Endothelial cell of umbilical vein (primary cell): ENCODE measurements at regions of chr5 and their contacts with region 1.

Region 1: DNA sequence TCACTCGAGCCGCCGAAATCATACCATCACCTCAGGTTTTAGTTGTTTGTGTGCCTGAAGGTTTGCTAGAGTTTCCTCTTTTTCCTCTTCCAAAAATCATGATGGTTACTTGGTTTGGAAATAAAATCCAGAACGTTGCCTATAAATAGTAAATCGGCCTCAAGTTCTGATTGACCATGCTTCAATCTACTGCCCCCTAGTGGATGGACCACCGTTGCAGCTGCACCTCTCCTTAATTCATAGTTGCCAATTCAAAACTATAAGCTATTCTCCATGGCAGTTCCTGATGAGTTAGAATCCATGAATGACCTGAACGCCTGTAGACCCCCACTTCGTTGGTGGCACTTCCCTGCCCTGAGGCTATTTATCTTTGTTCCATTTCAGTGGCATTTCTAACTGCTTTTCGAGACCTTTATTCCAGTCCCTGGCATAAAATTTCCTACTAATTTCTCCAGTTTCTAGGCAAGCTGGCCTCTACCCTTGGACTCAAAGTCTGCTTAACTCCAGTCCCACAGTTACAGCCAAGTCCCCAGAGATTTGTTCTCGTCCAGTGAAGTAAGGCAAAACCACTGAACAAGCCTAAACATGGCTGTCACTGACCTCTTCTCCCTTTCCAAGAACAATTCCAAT is 422.6 kb downstream of the EFNA5 start:
- DNase-seq: peak; percentile 69
- H3K4me3 ChIP-seq: no peak overlapping the region
- H3K27ac ChIP-seq: no peak overlapping the region
- H3K4me1 ChIP-seq: no peaks in the 10 kb centered on the region
- H3K27me3 ChIP-seq: no peaks in the 10 kb centered on the region
- CTCF ChIP-seq: peak; percentile 77 to 79
- POLR2A ChIP-seq: no peak

Region 2: GRCh38 chr5:106121972-106122605 is 1126.1 kb before region 1 on chr5:
- CTCF ChIA-PET with region 1: interaction called, 13 read pairs
- POLR2A ChIA-PET with region 1: no interaction called
- dilution Hi-C with region 1: no loop called
- intact Hi-C with region 1: loop called (anchors 2 kb)
- DNase-seq: no peak
- H3K4me3 ChIP-seq: no peak overlapping the region
- H3K27ac ChIP-seq: no peak overlapping the region
- H3K4me1 ChIP-seq: no peaks in the 10 kb centered on the region
- H3K27me3 ChIP-seq: no peaks in the 10 kb centered on the region
- CTCF ChIP-seq: peak; percentile 60 to 70
- POLR2A ChIP-seq: no peak

Region 3: GRCh38 chr5:106454651-106455415 is 793.3 kb before region 1 on chr5:
- CTCF ChIA-PET with region 1: interaction called, 25 read pairs
- POLR2A ChIA-PET with region 1: no interaction called
- dilution Hi-C with region 1: no loop called
- intact Hi-C with region 1: loop called (anchors 1 kb)
- DNase-seq: peak; percentile 72
- H3K4me3 ChIP-seq: no peak overlapping the region
- H3K27ac ChIP-seq: no peak overlapping the region
- H3K4me1 ChIP-seq: no peaks in the 10 kb centered on the region
- H3K27me3 ChIP-seq: no peaks in the 10 kb centered on the region
- CTCF ChIP-seq: peak; percentile 46 to 62
- POLR2A ChIP-seq: no peak

Region 4: DNA sequence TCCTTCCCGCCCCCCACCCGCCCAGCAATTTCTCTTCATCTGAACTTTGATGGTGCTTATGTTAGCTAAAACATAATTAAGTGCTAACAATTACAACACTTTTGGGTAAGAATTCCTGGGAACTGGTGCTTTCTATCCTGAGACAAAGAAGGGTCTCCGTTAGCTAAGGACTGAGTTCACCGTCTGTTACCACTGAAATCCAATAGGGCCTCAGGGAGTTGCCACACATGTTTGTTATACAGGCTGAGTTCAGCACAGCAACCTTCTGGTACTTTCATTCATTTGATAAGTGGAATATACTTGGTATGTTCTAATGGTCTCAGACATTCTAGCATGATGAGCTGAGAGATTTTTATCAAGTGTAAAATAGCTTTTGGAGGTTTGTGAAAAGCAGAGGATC is 15.4 kb before region 1 on chr5:
- CTCF ChIA-PET with region 1: interaction called, 22 read pairs
- POLR2A ChIA-PET with region 1: no interaction called
- dilution Hi-C with region 1: no loop called
- intact Hi-C with region 1: no loop called
- DNase-seq: no peak
- H3K4me3 ChIP-seq: no peak overlapping the region
- H3K27ac ChIP-seq: no peak overlapping the region
- H3K4me1 ChIP-seq: no peaks in the 10 kb centered on the region
- H3K27me3 ChIP-seq: no peaks in the 10 kb centered on the region
- CTCF ChIP-seq: no peak
- POLR2A ChIP-seq: no peak

Region 5: DNA sequence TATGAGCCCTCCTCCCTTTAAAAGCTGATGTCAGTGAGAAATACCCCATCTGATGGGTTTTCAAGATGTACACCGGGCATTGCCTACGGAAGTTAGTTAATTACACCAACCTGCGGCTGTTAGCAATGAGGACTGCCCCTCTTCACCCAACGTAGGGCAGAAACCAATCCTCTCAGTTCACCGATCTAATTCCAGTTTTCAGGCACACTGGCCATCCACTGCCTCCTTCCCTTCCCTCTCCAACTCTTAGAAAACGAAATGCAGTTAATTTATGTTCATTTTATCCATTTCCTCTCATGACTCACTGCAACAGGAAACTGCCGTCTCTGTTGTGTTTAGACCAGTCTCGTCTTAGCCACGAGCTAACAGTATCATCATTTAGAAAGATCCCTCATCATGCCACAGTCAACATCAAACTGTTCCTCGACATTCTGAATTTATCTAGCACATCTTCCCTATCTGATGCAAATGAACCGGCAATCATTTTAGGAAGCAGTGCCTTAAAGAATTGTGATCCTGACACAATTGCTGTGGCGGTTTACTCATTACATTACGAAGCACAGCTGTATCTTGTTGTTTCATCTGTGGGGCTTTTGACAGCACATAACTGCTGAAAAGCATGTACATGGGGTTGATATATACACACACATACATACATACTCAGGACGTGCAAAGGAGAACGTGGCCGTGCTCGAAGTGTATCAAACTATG is 253.9 kb after region 1 on chr5:
- CTCF ChIA-PET with region 1: interaction called, 10 read pairs
- POLR2A ChIA-PET with region 1: no interaction called
- dilution Hi-C with region 1: no loop called
- intact Hi-C with region 1: no loop called
- DNase-seq: peak; percentile 93
- H3K4me3 ChIP-seq: peak overlapping the region; percentile 43 to 90 (median 59)
- H3K27ac ChIP-seq: peak overlapping the region; percentile 97
- H3K4me1 ChIP-seq: peaks cover 24% of the 10 kb centered on the region
- H3K27me3 ChIP-seq: no peaks in the 10 kb centered on the region
- CTCF ChIP-seq: no peak
- POLR2A ChIP-seq: peak; percentile 86